ENCODE measurements at regions of chr2 and their contacts with region 1.

Region 1: GRCh38 chr2:85707304-85707703 is 13.1 kb downstream of the GNLY start:
- DNase-seq: peak; percentile 79
- H3K4me3 Mint-ChIP-seq: no peak overlapping the region
- H3K27ac Mint-ChIP-seq: no peak overlapping the region
- H3K4me1 Mint-ChIP-seq: peaks cover 12% of the 10 kb centered on the region
- H3K27me3 Mint-ChIP-seq: peaks cover 6% of the 10 kb centered on the region

Region 2: DNA sequence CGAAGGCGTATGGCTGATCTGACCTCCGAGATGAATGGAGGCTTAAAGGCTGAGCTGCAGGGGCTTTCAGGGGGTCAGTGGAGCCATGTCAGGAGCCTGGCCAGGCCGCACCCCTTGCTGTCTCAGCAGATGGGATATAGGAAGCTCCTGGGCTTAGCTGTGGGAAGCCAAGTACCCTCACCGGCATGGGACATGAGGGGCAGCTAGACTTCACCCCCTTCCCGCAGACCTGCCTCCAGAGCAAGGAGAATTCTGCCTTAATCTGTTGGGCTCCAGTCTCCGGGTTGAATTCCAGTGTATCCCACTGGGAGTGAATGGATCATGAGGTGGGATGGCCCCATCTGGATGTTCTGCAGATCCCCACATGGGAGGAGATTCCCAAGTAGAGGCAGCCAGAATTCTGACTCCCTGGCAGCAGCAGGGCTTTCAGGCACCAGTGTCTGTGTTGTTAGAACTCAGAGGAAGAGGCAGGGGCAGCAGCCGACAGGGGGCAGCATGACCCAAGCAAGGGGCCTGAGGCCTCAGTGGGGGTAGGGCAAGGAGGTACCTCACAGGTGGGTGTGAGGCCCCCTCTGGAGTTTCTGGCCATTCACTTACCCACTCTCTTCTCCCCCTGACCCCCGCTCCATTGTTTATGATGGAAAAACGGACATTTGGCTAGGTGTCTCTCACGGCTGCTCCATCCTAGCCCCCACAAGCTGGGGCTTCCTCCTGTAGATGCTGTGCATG is 316.2 kb before region 1 on chr2:
- CTCF ChIA-PET with region 1: no interaction called
- intact Hi-C with region 1: loop called (anchors 5 kb)
- DNase-seq: peak; percentile 79
- H3K4me3 Mint-ChIP-seq: no peak overlapping the region
- H3K27ac Mint-ChIP-seq: no peak overlapping the region
- H3K4me1 Mint-ChIP-seq: peaks cover 5% of the 10 kb centered on the region
- H3K27me3 Mint-ChIP-seq: no peaks in the 10 kb centered on the region

Region 3: GRCh38 chr2:85635636-85636035 is 71.7 kb before region 1 on chr2:
- CTCF ChIA-PET with region 1: interaction called, 21 read pairs
- intact Hi-C with region 1: loop called (anchors 2 kb)
- DNase-seq: no peak
- H3K4me3 Mint-ChIP-seq: no peak overlapping the region
- H3K27ac Mint-ChIP-seq: no peak overlapping the region
- H3K4me1 Mint-ChIP-seq: peaks cover 9% of the 10 kb centered on the region
- H3K27me3 Mint-ChIP-seq: no peaks in the 10 kb centered on the region

Region 4: DNA sequence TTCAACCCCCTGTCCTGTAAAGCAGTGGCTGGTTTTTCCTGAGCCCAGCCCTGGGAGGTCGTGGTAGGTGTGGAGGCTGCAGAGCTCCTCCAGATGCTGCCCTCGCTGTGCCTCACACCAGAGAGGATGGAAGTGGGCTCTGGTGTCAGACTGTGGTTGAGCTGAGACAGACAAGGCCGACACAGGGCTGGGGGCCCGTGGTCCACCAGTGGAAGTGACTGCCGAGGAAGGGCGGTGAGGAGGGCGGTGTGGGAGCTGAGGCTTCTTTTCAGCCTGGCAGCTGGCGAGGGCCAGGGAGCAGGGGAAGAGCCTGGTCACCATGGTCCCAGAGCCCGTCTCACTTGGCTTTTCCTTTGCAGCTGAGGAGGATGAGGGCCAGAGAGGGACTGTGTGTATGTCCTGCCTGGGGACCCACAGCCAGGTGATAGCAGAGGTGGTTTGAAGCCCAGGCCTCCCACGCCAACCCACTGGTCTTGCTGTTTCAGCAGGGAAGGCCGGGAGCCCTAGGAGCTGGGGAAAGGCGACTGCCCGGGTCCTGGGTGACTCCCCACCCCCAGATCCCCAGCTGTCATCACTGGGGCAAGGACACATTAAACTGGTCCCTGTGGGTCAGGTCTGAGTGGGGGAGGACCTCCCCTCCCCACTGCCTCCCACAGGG is 47.9 kb before region 1 on chr2:
- CTCF ChIA-PET with region 1: interaction called, 10 read pairs
- intact Hi-C with region 1: no loop called
- DNase-seq: no peak
- H3K4me3 Mint-ChIP-seq: no peak overlapping the region
- H3K27ac Mint-ChIP-seq: no peak overlapping the region
- H3K4me1 Mint-ChIP-seq: no peaks in the 10 kb centered on the region
- H3K27me3 Mint-ChIP-seq: no peaks in the 10 kb centered on the region

Region 5: GRCh38 chr2:85678794-85679672 is 28.3 kb before region 1 on chr2:
- CTCF ChIA-PET with region 1: interaction called, 68 read pairs
- intact Hi-C with region 1: loop called (anchors 1 kb)
- DNase-seq: peak; percentile 83
- H3K4me3 Mint-ChIP-seq: no peak overlapping the region
- H3K27ac Mint-ChIP-seq: no peak overlapping the region
- H3K4me1 Mint-ChIP-seq: no peaks in the 10 kb centered on the region
- H3K27me3 Mint-ChIP-seq: no peaks in the 10 kb centered on the region

Region 6: GRCh38 chr2:85718009-85718391 is 10.7 kb after region 1 on chr2:
- CTCF ChIA-PET with region 1: interaction called, 12 read pairs
- intact Hi-C with region 1: no loop called
- DNase-seq: no peak
- H3K4me3 Mint-ChIP-seq: no peak overlapping the region
- H3K27ac Mint-ChIP-seq: no peak overlapping the region
- H3K4me1 Mint-ChIP-seq: peaks cover 5% of the 10 kb centered on the region
- H3K27me3 Mint-ChIP-seq: no peaks in the 10 kb centered on the region

Measured in activated naive CD4-positive, alpha-beta T cell treated with anti-CD3 and anti-CD28 coated beads for 36 hours (primary cell).